Activated CD4-positive, alpha-beta T cell treated with anti-CD3 and anti-CD28 coated beads, Interleukin-2, amount 10 ng/mL, durations not matched to agents 24 days and 14 days (primary cell): ENCODE measurements at regions of chr12 and their contacts with region 1.

Region 1: DNA sequence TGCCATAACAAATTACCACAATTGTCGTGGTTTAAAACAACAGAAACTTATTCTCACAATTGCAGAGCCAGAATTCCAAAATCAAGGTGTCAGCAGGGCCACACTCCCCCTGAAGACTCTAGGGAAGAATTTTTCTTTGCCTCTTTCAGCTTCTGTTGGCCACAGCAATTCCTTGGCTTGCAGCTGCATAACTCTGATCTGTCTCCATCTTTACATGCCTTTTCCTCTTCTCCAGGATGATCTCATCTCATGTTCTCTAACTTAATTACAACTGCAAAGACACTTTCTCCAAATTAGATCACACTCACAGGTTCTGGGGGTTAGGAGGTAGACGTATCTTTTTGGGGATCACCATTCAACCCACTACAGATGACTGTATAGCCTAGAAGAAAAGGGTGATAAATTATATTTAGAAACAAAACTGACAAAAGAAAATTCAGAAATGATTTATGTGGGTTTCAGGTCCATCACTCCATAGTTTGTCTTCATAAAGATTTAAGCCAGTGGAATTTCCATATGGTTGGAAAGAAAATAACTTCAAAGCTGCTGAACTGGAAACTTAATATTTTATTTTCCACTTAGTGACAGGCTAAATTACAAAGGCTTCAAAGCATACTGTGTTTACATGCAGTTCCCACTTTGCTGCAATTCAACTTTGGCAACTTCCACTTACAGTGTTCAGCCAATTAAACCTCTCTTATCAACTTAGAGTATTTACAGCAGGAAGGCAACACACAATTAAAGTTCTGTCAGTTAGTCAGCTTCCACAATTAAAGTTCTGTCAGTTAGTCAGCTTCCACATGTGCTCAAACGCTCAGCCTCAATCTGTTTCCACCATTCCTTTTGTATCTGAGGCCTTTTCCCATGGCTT is 213.3 kb downstream of the EPS8 start:
- DNase-seq: peak; percentile 50
- H3K4me3 Mint-ChIP-seq: no peak overlapping the region
- H3K27ac Mint-ChIP-seq: peak overlapping the region; percentile 60
- H3K4me1 Mint-ChIP-seq: peaks cover 39% of the 10 kb centered on the region
- H3K27me3 Mint-ChIP-seq: no peaks in the 10 kb centered on the region

Region 2: GRCh38 chr12:14948672-14949071 is 627.2 kb before region 1 on chr12:
- intact Hi-C with region 1: loop called (anchors 5 kb)
- DNase-seq: peak; percentile 89
- H3K4me3 Mint-ChIP-seq: peak overlapping the region; percentile 79
- H3K27ac Mint-ChIP-seq: peak overlapping the region; percentile 95
- H3K4me1 Mint-ChIP-seq: peaks cover 74% of the 10 kb centered on the region
- H3K27me3 Mint-ChIP-seq: no peaks in the 10 kb centered on the region

Region 3: DNA sequence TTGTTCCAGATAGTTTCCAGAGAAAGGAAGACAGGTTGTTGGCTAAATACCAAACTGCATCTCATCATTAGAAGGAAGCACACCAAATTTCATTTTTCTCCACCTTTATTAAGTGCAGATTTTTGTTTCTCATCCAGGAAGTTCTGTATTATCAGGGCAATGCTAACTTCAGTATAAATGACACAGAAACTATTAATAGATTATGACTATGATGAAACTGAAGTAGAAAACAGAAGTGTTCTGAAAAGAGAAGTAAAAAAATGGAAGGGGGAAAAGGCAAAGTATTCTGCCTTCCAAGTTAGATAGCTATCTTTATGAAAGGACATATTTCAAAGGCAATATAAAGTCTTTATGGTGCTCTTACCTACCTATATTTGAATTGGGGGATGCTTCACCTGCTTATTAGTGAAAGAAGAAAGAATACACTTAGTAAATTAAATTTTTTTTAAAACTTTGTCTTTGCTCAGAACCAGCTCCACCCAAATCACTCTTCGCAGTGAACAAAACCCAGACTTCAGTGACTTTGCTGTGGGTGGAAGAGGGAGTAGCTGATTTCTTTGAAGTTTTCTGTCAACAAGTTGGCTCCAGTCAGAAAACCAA is 29.7 kb before region 1 on chr12:
- intact Hi-C with region 1: loop called (anchors 1 kb)
- DNase-seq: peak; percentile 80
- H3K4me3 Mint-ChIP-seq: peak overlapping the region; percentile 58
- H3K27ac Mint-ChIP-seq: peak overlapping the region; percentile 87
- H3K4me1 Mint-ChIP-seq: peaks cover 42% of the 10 kb centered on the region
- H3K27me3 Mint-ChIP-seq: no peaks in the 10 kb centered on the region

Region 4: DNA sequence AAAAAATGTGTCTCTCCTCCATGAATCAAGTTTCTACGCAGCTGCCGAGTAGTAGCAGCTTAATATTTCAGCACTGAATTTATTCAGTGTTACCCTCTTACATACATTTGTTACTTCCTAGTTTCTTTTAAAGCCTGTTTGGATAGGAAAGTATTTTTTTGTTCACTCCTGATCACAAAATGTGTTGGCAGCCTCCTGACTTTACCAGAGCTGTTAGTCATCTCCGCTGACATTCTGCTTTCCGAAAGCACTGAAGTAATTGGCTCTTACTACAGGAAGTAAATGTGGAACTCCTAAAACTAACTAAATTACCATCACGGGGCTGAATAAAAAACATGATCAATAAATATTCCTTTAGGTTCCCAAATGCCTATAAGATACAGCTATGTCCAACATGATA is 12.2 kb before region 1 on chr12:
- intact Hi-C with region 1: loop called (anchors 1 kb)
- DNase-seq: peak; percentile 80
- H3K4me3 Mint-ChIP-seq: peak overlapping the region; percentile 82
- H3K27ac Mint-ChIP-seq: peak overlapping the region; percentile 94
- H3K4me1 Mint-ChIP-seq: peaks cover 65% of the 10 kb centered on the region
- H3K27me3 Mint-ChIP-seq: no peaks in the 10 kb centered on the region

Region 5: GRCh38 chr12:15599266-15600037 is 23.5 kb after region 1 on chr12:
- intact Hi-C with region 1: no loop called
- DNase-seq: no peak
- H3K4me3 Mint-ChIP-seq: no peak overlapping the region
- H3K27ac Mint-ChIP-seq: no peak overlapping the region
- H3K4me1 Mint-ChIP-seq: peaks cover 2% of the 10 kb centered on the region
- H3K27me3 Mint-ChIP-seq: no peaks in the 10 kb centered on the region

Region 6: GRCh38 chr12:15679146-15679545 is 103.2 kb after region 1 on chr12:
- intact Hi-C with region 1: no loop called
- DNase-seq: no peak
- H3K4me3 Mint-ChIP-seq: no peak overlapping the region
- H3K27ac Mint-ChIP-seq: no peak overlapping the region
- H3K4me1 Mint-ChIP-seq: no peaks in the 10 kb centered on the region
- H3K27me3 Mint-ChIP-seq: peaks cover 28% of the 10 kb centered on the region

Region 7: DNA sequence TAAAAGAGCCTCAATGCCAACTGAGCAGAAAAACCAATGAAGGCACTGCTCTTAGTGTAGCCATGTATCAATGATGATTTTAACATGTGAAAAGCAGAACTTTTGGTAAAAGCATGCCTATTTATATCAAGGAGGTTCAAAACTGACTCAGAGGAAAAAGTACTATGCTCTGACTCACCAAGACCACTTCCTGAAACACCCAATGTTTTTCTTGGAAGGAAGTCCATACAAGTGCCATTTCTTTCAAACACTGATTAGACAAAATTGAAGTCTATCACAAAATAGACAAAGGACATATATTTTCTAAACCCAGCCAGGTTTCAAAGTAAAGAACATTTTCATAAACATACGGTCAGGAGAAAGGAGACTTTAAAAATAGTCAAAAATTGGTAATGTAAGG is 124.7 kb after region 1 on chr12:
- intact Hi-C with region 1: no loop called
- DNase-seq: peak; percentile 74
- H3K4me3 Mint-ChIP-seq: peak overlapping the region; percentile 77
- H3K27ac Mint-ChIP-seq: peak overlapping the region; percentile 95
- H3K4me1 Mint-ChIP-seq: peaks cover 33% of the 10 kb centered on the region
- H3K27me3 Mint-ChIP-seq: no peaks in the 10 kb centered on the region

Region 8: GRCh38 chr12:16030729-16031128 is 454.8 kb after region 1 on chr12:
- intact Hi-C with region 1: no loop called
- DNase-seq: no peak
- H3K4me3 Mint-ChIP-seq: no peak overlapping the region
- H3K27ac Mint-ChIP-seq: no peak overlapping the region
- H3K4me1 Mint-ChIP-seq: no peaks in the 10 kb centered on the region
- H3K27me3 Mint-ChIP-seq: no peaks in the 10 kb centered on the region